CD14-positive monocyte (primary cell): ENCODE measurements at regions of chr20 and their contacts with region 1.

Region 1: GRCh38 chr20:23161968-23162696 is 76.0 kb upstream of the CD93 start:
- DNase-seq: peak; percentile 99 to 100 (median 99)
- H3K4me3 ChIP-seq: no peak overlapping the region
- H3K4me3 Mint-ChIP-seq: peak overlapping the region; percentile 9 to 42
- H3K27ac ChIP-seq: peak overlapping the region; percentile 87 to 100
- H3K27ac Mint-ChIP-seq: peak overlapping the region; percentile 91 to 100 (median 98)
- H3K4me1 ChIP-seq: peaks cover 60% of the 10 kb centered on the region in 2 donors
- H3K4me1 Mint-ChIP-seq: peaks cover 66% of the 10 kb centered on the region
- H3K27me3 ChIP-seq: no peaks in the 10 kb centered on the region
- H3K27me3 Mint-ChIP-seq: peaks cover 0 to 5% (median 0%) of the 10 kb centered on the region in 3 donors
- CTCF ChIP-seq: no peak

Region 2: GRCh38 chr20:23174821-23175220 is 12.7 kb after region 1 on chr20:
- intact Hi-C with region 1: loop called in 1 of 2 experiments (anchors 1 kb)
- DNase-seq: no peak
- H3K4me3 ChIP-seq: no peak overlapping the region
- H3K4me3 Mint-ChIP-seq: no peak overlapping the region
- H3K27ac ChIP-seq: no peak overlapping the region
- H3K27ac Mint-ChIP-seq: no peak overlapping the region
- H3K4me1 ChIP-seq: peaks cover 0 to 8% of the 10 kb centered on the region in 2 donors
- H3K4me1 Mint-ChIP-seq: peaks cover 19% of the 10 kb centered on the region
- H3K27me3 ChIP-seq: no peaks in the 10 kb centered on the region
- H3K27me3 Mint-ChIP-seq: peaks cover 0 to 2% (median 2%) of the 10 kb centered on the region in 3 donors
- CTCF ChIP-seq: no peak

Region 3: GRCh38 chr20:23407781-23408464 is 245.8 kb after region 1 on chr20:
- intact Hi-C with region 1: no loop called
- DNase-seq: peak in 1 of 3 donors; percentile 18
- H3K4me3 ChIP-seq: no peak overlapping the region
- H3K4me3 Mint-ChIP-seq: no peak overlapping the region
- H3K27ac ChIP-seq: no peak overlapping the region
- H3K27ac Mint-ChIP-seq: peak overlapping the region in 2 of 7 donors; percentile 21 to 46
- H3K4me1 ChIP-seq: no peaks in the 10 kb centered on the region
- H3K4me1 Mint-ChIP-seq: peaks cover 15% of the 10 kb centered on the region
- H3K27me3 ChIP-seq: no peaks in the 10 kb centered on the region
- H3K27me3 Mint-ChIP-seq: peaks cover 0 to 1% (median 0%) of the 10 kb centered on the region in 3 donors
- CTCF ChIP-seq: no peak